ENCODE measurements at regions of chr1 and their contacts with region 1.

Region 1: DNA sequence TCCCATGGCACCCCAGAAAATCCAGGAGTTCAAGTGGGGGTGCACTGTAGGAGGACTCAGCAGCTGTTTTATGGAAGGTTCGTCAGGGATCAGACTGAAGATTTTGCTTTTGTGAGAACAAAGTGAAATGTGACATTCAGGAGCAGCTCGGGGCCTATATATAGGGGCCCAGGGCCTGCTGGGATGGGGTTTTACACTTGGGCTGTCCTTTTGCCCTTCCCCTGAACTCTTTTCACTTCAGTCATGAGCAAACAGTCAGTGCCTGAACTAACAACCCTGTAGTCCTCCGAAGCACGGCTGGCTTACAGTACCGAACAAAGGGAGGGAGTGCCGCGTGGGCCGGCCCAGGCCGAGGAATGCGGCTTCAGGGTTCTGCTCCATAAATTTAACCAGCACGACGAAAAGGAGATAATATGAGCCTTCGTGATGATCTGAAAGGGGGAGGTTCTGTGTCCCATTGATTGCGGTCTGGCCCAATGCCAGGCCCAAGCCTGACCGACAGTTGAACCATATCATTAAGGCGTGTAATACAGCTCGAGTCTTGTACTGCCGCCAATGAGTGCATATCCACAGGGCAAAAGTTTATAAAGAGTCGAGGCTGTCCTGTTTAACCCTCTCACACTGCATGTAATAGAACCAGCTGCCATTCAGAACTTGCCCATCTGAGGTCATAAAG is 139.9 kb downstream of the DHRS3 start:
- DNase-seq: peak; percentile 72 to 75
- ATAC-seq: peak; percentile 69 to 82 (median 79)
- H3K4me3 ChIP-seq: no peak overlapping the region
- H3K27ac ChIP-seq: peak overlapping the region; percentile 52 to 91 (median 78)
- H3K4me1 ChIP-seq: peaks cover 31 to 92% (median 85%) of the 10 kb centered on the region in 9 donors
- H3K27me3 ChIP-seq: no peaks in the 10 kb centered on the region
- CTCF ChIP-seq: no peak

Region 2: GRCh38 chr1:12407050-12407961 is 70.8 kb before region 1 on chr1:
- intact Hi-C with region 1: loop called in 1 of 10 experiments (anchors 10 kb)
- DNase-seq: peak in 1 of 2 donors; percentile 25
- ATAC-seq: peak; percentile 44 to 82 (median 76)
- H3K4me3 ChIP-seq: no peak overlapping the region
- H3K27ac ChIP-seq: peak overlapping the region in 9 of 10 donors; percentile 7 to 78 (median 67)
- H3K4me1 ChIP-seq: peaks cover 16 to 54% (median 43%) of the 10 kb centered on the region in 9 donors
- H3K27me3 ChIP-seq: no peaks in the 10 kb centered on the region
- CTCF ChIP-seq: peak in 8 of 9 donors; percentile 5 to 69 (median 57)

Region 3: DNA sequence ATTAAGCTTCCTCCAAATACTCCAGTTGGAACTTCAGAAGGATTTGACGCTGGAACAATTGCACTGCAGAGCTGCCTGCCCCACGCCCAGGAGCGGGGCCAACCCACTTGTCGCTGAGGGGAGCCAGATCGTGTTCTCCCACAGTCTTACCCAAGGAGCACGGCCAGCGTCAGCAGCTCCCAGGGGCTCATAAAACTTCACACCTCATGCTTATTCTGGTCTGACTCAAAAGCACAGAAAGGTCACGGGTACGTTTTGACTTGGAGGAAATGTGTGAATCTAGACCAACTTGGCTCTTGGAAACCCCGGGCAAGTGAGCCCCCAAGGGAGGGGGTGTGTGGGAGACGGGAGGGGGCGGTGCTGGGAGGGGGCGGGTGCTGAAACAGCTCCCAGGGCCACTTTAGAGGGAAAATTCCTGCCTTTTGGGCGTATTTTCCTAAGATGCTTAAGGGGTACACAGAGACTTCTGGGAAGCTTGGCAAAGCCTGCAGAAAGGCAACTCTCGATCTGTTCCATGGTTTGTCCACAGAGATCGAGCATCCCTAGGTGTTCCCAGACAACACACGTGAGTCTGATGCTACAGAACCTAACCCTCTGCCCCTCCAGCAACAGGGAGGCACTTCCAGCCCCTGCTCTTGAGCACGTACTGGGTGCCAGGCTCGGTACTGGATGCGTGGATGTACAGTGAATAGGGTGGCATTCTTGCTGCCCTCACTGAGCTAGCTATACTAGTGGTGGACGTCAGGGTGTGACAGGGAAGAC is 41.0 kb after region 1 on chr1:
- intact Hi-C with region 1: no loop called
- DNase-seq: peak; percentile 54 to 80
- ATAC-seq: peak; percentile 74 to 95 (median 87)
- H3K4me3 ChIP-seq: peak overlapping the region in 1 of 10 donors; percentile 3
- H3K27ac ChIP-seq: peak overlapping the region in 1 of 10 donors; percentile 2
- H3K4me1 ChIP-seq: peaks cover 6 to 22% (median 14%) of the 10 kb centered on the region in 9 donors
- H3K27me3 ChIP-seq: no peaks in the 10 kb centered on the region
- CTCF ChIP-seq: no peak

Region 4: DNA sequence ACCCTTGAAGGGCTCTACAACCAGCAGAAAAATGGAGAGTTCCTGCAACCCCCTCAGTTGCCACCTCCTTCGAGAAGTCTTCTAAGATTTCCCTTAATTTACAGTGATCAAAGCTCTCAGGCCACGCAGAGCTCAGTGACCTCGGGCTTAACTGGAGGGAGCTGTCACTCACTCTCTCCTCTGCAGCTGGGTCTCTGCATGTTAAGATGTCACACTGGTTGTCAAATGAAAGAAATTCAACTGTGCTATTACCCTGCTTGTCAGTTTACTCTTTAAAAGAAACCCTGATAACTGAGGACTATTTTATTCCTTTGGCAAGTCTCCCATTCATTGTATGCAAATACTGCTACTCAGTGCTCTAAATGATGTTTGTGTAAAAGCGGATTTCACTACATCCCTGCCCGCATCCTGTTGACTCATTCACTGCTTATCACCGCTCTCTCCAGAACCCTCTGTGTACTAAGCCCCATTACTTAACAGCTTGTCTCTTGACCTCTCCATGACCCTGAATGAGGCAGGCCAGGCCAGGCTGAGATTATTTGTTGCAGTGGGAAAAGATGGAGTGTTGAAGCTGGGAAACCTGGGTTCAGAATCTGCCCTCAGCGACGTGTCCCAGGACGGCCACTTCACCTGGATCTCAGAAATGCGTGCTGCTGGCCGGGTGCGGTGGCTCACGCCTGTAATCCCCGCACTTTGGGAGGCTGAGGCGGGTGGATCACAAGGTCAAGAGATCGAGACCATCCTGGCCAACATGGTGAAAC is 126.2 kb after region 1 on chr1:
- intact Hi-C with region 1: loop called in 1 of 10 experiments (anchors 5 kb)
- DNase-seq: peak; percentile 42 to 74
- ATAC-seq: peak; percentile 78 to 93 (median 86)
- H3K4me3 ChIP-seq: peak overlapping the region in 1 of 10 donors; percentile 12
- H3K27ac ChIP-seq: peak overlapping the region; percentile 53 to 95 (median 78)
- H3K4me1 ChIP-seq: peaks cover 49 to 75% (median 68%) of the 10 kb centered on the region in 9 donors
- H3K27me3 ChIP-seq: no peaks in the 10 kb centered on the region
- CTCF ChIP-seq: no peak